Heart left ventricle (tissue), 16 donors: ENCODE measurements at regions of chr4 and their contacts with region 1.

Region 1: DNA sequence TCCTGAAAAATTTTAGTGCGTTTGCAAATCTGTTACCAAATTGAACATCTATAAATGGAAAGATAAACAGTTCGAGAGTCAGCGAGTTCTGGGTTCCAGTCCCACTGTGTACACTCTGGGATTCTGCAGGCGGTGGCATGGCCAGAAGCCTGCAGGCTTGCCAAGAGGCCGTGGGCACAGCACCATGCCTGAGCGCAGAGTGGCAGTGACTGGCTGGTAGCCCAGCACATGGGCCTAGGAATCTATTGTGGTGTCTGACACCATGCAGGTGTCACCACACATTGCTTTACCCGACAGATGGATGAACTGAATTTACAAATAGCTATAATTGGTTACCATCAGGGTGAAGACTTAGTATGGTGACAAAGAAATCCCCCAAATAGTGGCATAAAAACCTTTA is 71.7 kb upstream of the TLR3 start:
- DNase-seq: peak in 3 of 5 donors; percentile 69 to 74 (median 73)
- ATAC-seq: peak; percentile 59 to 87 (median 84)
- H3K4me3 ChIP-seq: no peak overlapping the region
- H3K27ac ChIP-seq: no peak overlapping the region
- H3K4me1 ChIP-seq: peaks cover 0 to 12% (median 0%) of the 10 kb centered on the region in 12 donors
- H3K27me3 ChIP-seq: no peaks in the 10 kb centered on the region
- CTCF ChIP-seq: no peak
- POLR2A ChIP-seq: no peak

Region 2: DNA sequence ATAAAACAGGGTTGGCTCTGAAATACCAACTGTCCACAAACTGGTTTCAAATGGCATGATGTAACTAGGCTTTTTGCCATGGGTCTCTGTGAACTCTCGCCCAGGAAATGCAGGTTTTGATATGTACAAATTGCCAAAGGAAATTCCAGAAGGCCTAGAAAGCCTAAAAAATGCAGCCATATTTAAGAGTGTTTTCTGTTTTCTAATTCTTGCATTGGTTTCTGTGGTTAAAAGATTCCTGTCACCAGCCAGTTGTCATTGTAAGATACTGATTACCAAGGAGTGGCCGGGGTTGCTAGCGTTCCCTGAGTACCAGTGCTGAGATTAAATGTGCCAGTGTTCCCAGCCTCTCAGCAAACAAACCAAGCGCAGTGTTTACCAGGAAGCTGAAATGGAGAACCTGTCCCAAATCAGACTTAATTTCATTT is 131.4 kb before region 1 on chr4:
- intact Hi-C with region 1: loop called in 1 of 10 experiments (anchors 5 kb)
- DNase-seq: peak in 2 of 5 donors; percentile 39 to 61
- ATAC-seq: peak; percentile 62 to 79 (median 72)
- H3K4me3 ChIP-seq: no peak overlapping the region
- H3K27ac ChIP-seq: peak overlapping the region; percentile 56 to 94 (median 77)
- H3K4me1 ChIP-seq: peaks cover 0 to 59% (median 7%) of the 10 kb centered on the region in 12 donors
- H3K27me3 ChIP-seq: no peaks in the 10 kb centered on the region
- CTCF ChIP-seq: no peak
- POLR2A ChIP-seq: no peak

Region 3: GRCh38 chr4:185921583-185922555 is 75.4 kb before region 1 on chr4:
- intact Hi-C with region 1: loop called in 1 of 10 experiments (anchors 10 kb)
- DNase-seq: no peak
- ATAC-seq: peak in 2 of 4 donors; percentile 14 to 45
- H3K4me3 ChIP-seq: peak overlapping the region in 10 of 12 donors; percentile 12 to 41 (median 29)
- H3K27ac ChIP-seq: peak overlapping the region in 8 of 12 donors; percentile 10 to 61 (median 27)
- H3K4me1 ChIP-seq: peaks cover 0 to 19% (median 3%) of the 10 kb centered on the region in 12 donors
- H3K27me3 ChIP-seq: no peaks in the 10 kb centered on the region
- CTCF ChIP-seq: no peak
- POLR2A ChIP-seq: no peak

Region 4: GRCh38 chr4:185933078-185933581 is 64.2 kb before region 1 on chr4:
- intact Hi-C with region 1: loop called in 4 of 10 experiments (anchors 5 to 10 kb)
- DNase-seq: peak in 4 of 5 donors; percentile 23 to 44 (median 38)
- ATAC-seq: peak; percentile 74 to 89 (median 79)
- H3K4me3 ChIP-seq: peak overlapping the region in 4 of 12 donors; percentile 19 to 49 (median 40)
- H3K27ac ChIP-seq: peak overlapping the region in 4 of 12 donors; percentile 18 to 64 (median 44)
- H3K4me1 ChIP-seq: peaks cover 0 to 6% (median 0%) of the 10 kb centered on the region in 12 donors
- H3K27me3 ChIP-seq: no peaks in the 10 kb centered on the region
- CTCF ChIP-seq: no peak
- POLR2A ChIP-seq: no peak

Region 5: GRCh38 chr4:186037692-186038658 is 40.7 kb after region 1 on chr4:
- intact Hi-C with region 1: no loop called
- DNase-seq: peak in 2 of 5 donors; percentile 49 to 68
- ATAC-seq: peak; percentile 49 to 87 (median 79)
- H3K4me3 ChIP-seq: no peak overlapping the region
- H3K27ac ChIP-seq: peak overlapping the region in 1 of 12 donors; percentile 49
- H3K4me1 ChIP-seq: peaks cover 0 to 11% (median 6%) of the 10 kb centered on the region in 12 donors
- H3K27me3 ChIP-seq: no peaks in the 10 kb centered on the region
- CTCF ChIP-seq: peak; percentile 73 to 92 (median 83)
- POLR2A ChIP-seq: no peak

Region 6: GRCh38 chr4:186067757-186068385 is 70.6 kb after region 1 on chr4:
- intact Hi-C with region 1: no loop called
- DNase-seq: peak in 4 of 5 donors; percentile 50 to 62 (median 55)
- ATAC-seq: peak; percentile 71 to 92 (median 91)
- H3K4me3 ChIP-seq: peak overlapping the region; percentile 19 to 71 (median 60)
- H3K27ac ChIP-seq: peak overlapping the region in 6 of 12 donors; percentile 46 to 79 (median 72)
- H3K4me1 ChIP-seq: peaks cover 0 to 20% (median 4%) of the 10 kb centered on the region in 12 donors
- H3K27me3 ChIP-seq: no peaks in the 10 kb centered on the region
- CTCF ChIP-seq: peak; percentile 35 to 65 (median 53)
- POLR2A ChIP-seq: no peak